MCF 10A (cell line): ENCODE measurements at regions of chr18 and their contacts with region 1.

Region 1: DNA sequence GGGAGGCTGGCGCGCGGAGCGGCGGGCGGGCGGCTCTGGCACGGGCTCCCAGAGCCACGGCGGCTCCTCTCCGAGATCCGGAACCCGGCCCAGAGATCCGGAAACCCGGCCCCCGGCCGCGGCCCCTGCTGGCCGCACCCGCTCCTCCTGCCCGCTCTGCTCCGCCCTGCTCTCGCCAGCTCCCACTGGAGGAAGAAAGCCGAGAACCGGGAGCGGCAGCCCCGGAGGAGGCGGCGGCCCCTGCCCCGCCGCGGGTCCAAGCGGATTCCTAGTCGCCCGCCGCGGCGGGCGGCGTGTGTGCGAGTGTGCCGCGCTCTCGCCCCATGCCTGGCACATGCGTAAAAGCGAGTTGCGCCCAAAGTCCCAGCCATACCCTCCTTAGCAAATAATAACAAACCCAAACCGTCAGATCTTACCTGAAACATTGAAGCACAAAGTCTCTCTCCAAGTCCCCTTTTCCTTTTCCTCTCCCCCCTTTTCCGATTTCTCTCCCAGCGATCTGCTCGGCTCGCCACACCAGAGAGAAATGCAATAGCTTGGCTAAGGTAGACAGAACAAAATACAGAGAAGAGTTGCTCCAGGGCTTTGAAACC is 108.7 kb upstream of the KCTD1 start:
- DNase-seq: peak; percentile 73
- H3K4me3 Mint-ChIP-seq: peak overlapping the region; percentile 99
- H3K27ac Mint-ChIP-seq: peak overlapping the region; percentile 94
- H3K4me1 Mint-ChIP-seq: peaks cover 14% of the 10 kb centered on the region
- H3K27me3 Mint-ChIP-seq: no peaks in the 10 kb centered on the region
- CTCF ChIP-seq: peak; percentile 15

Region 2: GRCh38 chr18:26697186-26697884 is 40.3 kb after region 1 on chr18:
- CTCF ChIA-PET with region 1: no interaction called
- POLR2A ChIA-PET with region 1: no interaction called
- intact Hi-C with region 1: no loop called
- DNase-seq: no peak
- H3K4me3 Mint-ChIP-seq: no peak overlapping the region
- H3K27ac Mint-ChIP-seq: no peak overlapping the region
- H3K4me1 Mint-ChIP-seq: no peaks in the 10 kb centered on the region
- H3K27me3 Mint-ChIP-seq: no peaks in the 10 kb centered on the region
- CTCF ChIP-seq: no peak

Region 3: DNA sequence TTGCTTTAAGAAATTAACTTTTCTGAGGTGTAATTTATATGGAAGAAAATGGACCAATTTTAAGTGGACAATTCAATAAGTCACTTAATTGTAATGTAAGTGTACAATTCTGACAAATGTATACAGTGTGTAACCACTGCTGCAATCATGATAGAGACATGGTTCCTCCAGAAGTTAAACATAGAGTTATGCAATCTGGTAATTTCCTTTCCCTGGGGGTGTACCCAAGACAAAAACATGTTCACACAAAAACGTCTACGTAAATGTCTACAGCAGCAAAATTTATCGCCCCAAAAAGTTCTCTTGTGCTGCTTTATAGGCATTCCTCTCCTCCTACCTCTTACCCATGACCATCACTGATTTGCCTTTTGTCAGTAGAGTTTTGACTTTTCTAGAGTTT is 66.9 kb after region 1 on chr18:
- CTCF ChIA-PET with region 1: no interaction called
- POLR2A ChIA-PET with region 1: interaction called, 14 read pairs
- intact Hi-C with region 1: no loop called
- DNase-seq: peak; percentile 67
- H3K4me3 Mint-ChIP-seq: no peak overlapping the region
- H3K27ac Mint-ChIP-seq: peak overlapping the region; percentile 44
- H3K4me1 Mint-ChIP-seq: peaks cover 31% of the 10 kb centered on the region
- H3K27me3 Mint-ChIP-seq: no peaks in the 10 kb centered on the region
- CTCF ChIP-seq: no peak

Region 4: GRCh38 chr18:26746279-26747150 is 89.5 kb after region 1 on chr18:
- CTCF ChIA-PET with region 1: no interaction called
- POLR2A ChIA-PET with region 1: interaction called, 17 read pairs
- intact Hi-C with region 1: no loop called
- DNase-seq: peak; percentile 69
- H3K4me3 Mint-ChIP-seq: peak overlapping the region; percentile 40
- H3K27ac Mint-ChIP-seq: peak overlapping the region; percentile 71
- H3K4me1 Mint-ChIP-seq: peaks cover 32% of the 10 kb centered on the region
- H3K27me3 Mint-ChIP-seq: no peaks in the 10 kb centered on the region
- CTCF ChIP-seq: no peak

Region 5: GRCh38 chr18:26757263-26758019 is 100.4 kb after region 1 on chr18:
- CTCF ChIA-PET with region 1: no interaction called
- POLR2A ChIA-PET with region 1: interaction called, 28 read pairs
- intact Hi-C with region 1: no loop called
- DNase-seq: peak; percentile 45
- H3K4me3 Mint-ChIP-seq: no peak overlapping the region
- H3K27ac Mint-ChIP-seq: peak overlapping the region; percentile 60
- H3K4me1 Mint-ChIP-seq: peaks cover 22% of the 10 kb centered on the region
- H3K27me3 Mint-ChIP-seq: no peaks in the 10 kb centered on the region
- CTCF ChIP-seq: no peak

Region 6: GRCh38 chr18:26764628-26765027 is 107.6 kb after region 1 on chr18:
- CTCF ChIA-PET with region 1: no interaction called
- POLR2A ChIA-PET with region 1: interaction called, 26 read pairs
- intact Hi-C with region 1: no loop called
- DNase-seq: peak; percentile 34
- H3K4me3 Mint-ChIP-seq: no peak overlapping the region
- H3K27ac Mint-ChIP-seq: peak overlapping the region; percentile 25
- H3K4me1 Mint-ChIP-seq: peaks cover 26% of the 10 kb centered on the region
- H3K27me3 Mint-ChIP-seq: no peaks in the 10 kb centered on the region
- CTCF ChIP-seq: no peak

Region 7: GRCh38 chr18:26771524-26771923 is 114.5 kb after region 1 on chr18:
- CTCF ChIA-PET with region 1: no interaction called
- POLR2A ChIA-PET with region 1: interaction called, 9 read pairs
- intact Hi-C with region 1: loop called (anchors 1 kb)
- DNase-seq: peak; percentile 46
- H3K4me3 Mint-ChIP-seq: no peak overlapping the region
- H3K27ac Mint-ChIP-seq: no peak overlapping the region
- H3K4me1 Mint-ChIP-seq: peaks cover 5% of the 10 kb centered on the region
- H3K27me3 Mint-ChIP-seq: no peaks in the 10 kb centered on the region
- CTCF ChIP-seq: peak; percentile 30

Region 8: GRCh38 chr18:26963292-26963691 is 306.3 kb after region 1 on chr18:
- CTCF ChIA-PET with region 1: interaction called, 4 read pairs
- POLR2A ChIA-PET with region 1: no interaction called
- intact Hi-C with region 1: loop called (anchors 10 kb)
- DNase-seq: peak; percentile 33
- H3K4me3 Mint-ChIP-seq: no peak overlapping the region
- H3K27ac Mint-ChIP-seq: no peak overlapping the region
- H3K4me1 Mint-ChIP-seq: no peaks in the 10 kb centered on the region
- H3K27me3 Mint-ChIP-seq: no peaks in the 10 kb centered on the region
- CTCF ChIP-seq: peak; percentile 37